Activated T-helper 2 cell treated with anti-CD3 and anti-CD28 coated beads, Interferon-gamma antibody, Interleukin-2, Interleukin-4, amounts not matched to agents 10 μg/mL and 5 μg/mL and 100 μg/mL, durations not matched to agents 14 hours and 24 hours and 36 hours (primary cell): ENCODE measurements at regions of chr18 and their contacts with region 1.

Region 1: GRCh38 chr18:2104620-2105462 is 466.5 kb downstream of the METTL4 start:
- DNase-seq: peak; percentile 16
- H3K4me3 Mint-ChIP-seq: no peak overlapping the region
- H3K27ac Mint-ChIP-seq: no peak overlapping the region
- H3K4me1 Mint-ChIP-seq: no peaks in the 10 kb centered on the region
- H3K27me3 Mint-ChIP-seq: peaks cover 4% of the 10 kb centered on the region

Region 2: DNA sequence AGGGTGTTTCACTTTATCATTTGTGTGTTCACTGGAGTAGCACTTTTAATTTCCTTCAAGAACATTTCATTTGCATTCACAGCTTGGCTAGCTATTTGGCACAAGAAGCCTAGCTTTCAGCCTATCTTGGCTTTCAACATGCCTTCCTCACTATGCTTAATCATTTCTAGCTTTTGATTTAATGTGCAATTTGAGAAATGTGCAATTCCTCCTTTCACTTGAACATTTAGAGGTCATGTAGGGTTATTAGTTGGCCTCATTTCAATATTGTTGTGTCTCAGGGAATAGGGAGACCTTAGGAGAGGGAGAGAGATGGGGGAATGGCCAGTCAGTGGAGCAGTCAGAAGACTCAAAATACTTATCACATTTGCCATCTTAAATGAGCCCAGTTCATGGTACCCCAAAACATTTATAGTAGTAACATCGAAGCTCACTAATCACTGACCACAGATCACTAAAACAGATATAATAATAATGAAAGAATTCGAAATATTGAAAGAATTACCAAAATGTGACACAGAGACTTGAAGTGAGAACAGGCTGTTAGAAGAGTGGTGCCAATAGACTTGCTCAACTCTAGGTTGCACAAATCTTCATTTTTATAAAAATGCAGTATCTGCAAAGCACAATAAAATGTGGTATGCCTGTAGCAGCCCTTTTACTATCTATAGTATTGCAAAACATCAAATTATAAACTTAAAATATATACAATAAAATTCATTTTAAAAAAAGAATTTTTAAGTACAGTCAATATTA is 94.7 kb before region 1 on chr18:
- intact Hi-C with region 1: no loop called
- DNase-seq: no peak
- H3K4me3 Mint-ChIP-seq: no peak overlapping the region
- H3K27ac Mint-ChIP-seq: no peak overlapping the region
- H3K4me1 Mint-ChIP-seq: no peaks in the 10 kb centered on the region
- H3K27me3 Mint-ChIP-seq: no peaks in the 10 kb centered on the region

Region 3: GRCh38 chr18:2223849-2224248 is 119.0 kb after region 1 on chr18:
- intact Hi-C with region 1: loop called (anchors 10 kb)
- DNase-seq: no peak
- H3K4me3 Mint-ChIP-seq: no peak overlapping the region
- H3K27ac Mint-ChIP-seq: no peak overlapping the region
- H3K4me1 Mint-ChIP-seq: no peaks in the 10 kb centered on the region
- H3K27me3 Mint-ChIP-seq: no peaks in the 10 kb centered on the region

Region 4: GRCh38 chr18:2547477-2548087 is 442.7 kb after region 1 on chr18:
- intact Hi-C with region 1: loop called (anchors 2 kb)
- DNase-seq: no peak
- H3K4me3 Mint-ChIP-seq: no peak overlapping the region
- H3K27ac Mint-ChIP-seq: no peak overlapping the region
- H3K4me1 Mint-ChIP-seq: no peaks in the 10 kb centered on the region
- H3K27me3 Mint-ChIP-seq: no peaks in the 10 kb centered on the region